PC-9 (cell line): ENCODE measurements at regions of chr14 and their contacts with region 1.

Region 1: DNA sequence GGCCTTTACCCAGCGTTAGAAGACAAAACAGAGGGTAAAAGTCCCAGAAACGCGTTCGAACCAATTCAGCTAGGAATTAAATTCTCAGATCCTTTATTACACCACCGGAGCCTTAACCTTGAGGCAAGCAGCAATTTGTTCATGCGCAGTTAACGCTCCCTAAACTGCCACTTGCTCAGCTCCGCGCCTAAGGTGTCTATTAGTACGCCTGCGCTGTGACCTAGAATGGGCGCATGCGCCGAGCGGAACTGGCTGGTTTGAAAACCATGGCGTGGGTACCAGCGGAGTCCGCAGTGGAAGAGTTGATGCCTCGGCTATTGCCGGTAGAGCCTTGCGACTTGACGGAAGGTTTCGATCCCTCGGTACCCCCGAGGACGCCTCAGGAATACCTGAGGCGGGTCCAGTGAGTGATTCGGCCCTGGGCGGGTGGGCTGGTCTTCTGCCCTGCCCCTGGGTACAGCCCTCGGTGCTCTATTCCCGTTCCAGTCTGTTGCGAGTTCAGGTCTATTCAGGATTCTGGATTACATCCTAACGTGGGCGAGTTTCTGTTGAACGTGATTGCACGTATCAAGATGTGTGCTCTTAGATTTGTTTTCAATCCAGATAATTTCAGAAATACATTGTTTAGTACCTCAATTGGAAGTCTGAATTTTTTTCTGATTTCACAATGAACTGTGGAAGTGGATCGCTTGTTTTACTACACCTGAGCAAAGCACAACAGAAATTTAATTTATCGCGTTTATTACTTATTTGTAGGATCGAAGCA is at the start of gene GEMIN2:
- DNase-seq: peak; percentile 82 to 84
- H3K4me3 ChIP-seq: peak within 1 kb of the TSS; percentile 69
- H3K27ac ChIP-seq: peak within 1 kb of the TSS; percentile 66
- H3K4me1 ChIP-seq: peaks cover 11% of the 10 kb centered on the region; the same call in 1 of the 2 replicates
- H3K27me3 ChIP-seq: no peaks in the 10 kb centered on the region
- CTCF ChIP-seq: no peak
- total RNA-seq, gene GEMIN2: 11.6 and 13.4 TPM in 2 replicates

Region 2: DNA sequence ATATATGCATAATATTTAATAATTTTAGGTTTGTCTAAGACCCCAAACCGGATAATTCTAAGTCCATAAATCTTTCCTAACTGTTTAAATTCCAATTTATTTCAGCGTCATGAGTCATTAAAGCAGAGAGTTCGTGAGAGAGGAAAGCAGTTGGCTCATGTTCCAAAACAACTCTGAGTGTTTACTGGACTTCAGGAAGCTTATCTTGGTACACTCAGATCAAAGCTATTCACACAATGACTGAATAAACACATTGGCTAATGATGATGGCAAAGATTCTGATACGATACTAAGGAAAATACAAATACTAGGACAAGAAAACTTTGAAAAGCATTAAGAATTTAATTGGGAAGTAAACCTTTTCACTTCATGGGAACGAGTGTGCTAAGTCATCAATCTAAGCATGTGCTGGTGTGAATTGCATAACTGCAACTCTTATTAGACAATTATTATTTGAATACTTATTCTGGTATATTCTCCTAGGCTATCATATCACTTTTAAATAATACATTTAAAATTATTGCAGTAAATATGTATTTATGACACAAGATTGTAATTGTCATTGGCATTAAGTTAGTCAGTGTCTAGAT is 823.6 kb before region 1 on chr14:
- CTCF ChIA-PET with region 1: no interaction called
- POLR2A ChIA-PET with region 1: no interaction called
- intact Hi-C with region 1: no loop called
- DNase-seq: peak in 1 of 2 experiments; percentile 87
- H3K4me3 ChIP-seq: no peak overlapping the region
- H3K27ac ChIP-seq: peak overlapping the region; percentile 75
- H3K4me1 ChIP-seq: peaks cover 18% of the 10 kb centered on the region
- H3K27me3 ChIP-seq: no peaks in the 10 kb centered on the region
- CTCF ChIP-seq: no peak

Region 3: DNA sequence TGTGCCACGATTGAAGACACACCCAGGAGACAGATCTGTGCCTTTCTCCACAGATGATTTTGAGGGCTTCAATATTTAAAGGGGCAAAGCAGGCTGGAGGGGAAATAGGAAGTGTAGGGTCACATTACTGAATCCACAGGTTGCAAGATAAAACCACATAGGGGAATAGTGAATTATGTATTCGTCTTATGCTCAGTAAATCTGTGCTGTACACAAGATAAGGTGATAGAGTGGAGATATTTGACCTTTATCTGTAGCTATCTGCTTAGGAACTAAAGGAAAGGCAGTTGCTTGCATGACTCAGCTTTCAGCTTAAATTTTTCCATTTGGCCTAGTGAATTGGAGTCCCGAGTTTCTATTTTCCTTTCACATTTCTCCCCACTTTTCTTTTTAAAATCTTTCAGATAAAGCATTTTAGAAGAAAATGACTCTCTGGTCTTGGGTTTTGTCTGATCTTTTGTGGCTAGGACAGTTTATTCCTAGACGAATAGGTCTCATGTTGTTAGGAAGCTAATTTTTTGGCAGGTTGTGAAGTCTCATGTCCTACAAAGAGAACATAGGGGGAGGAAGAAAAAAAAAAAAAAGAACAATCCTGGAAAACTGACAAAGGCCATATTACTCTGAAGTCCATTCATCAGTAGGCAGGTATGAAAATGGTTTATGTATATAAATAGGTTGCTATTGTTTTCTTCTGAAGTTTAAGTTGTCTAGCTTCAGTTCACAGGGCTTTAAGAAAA is 262.6 kb after region 1 on chr14:
- CTCF ChIA-PET with region 1: no interaction called
- POLR2A ChIA-PET with region 1: interaction called, 11 read pairs
- intact Hi-C with region 1: no loop called
- DNase-seq: peak; percentile 10 to 61
- H3K4me3 ChIP-seq: no peak overlapping the region
- H3K27ac ChIP-seq: peak overlapping the region; percentile 82
- H3K4me1 ChIP-seq: peaks cover 18% of the 10 kb centered on the region
- H3K27me3 ChIP-seq: no peaks in the 10 kb centered on the region
- CTCF ChIP-seq: no peak

Region 4: DNA sequence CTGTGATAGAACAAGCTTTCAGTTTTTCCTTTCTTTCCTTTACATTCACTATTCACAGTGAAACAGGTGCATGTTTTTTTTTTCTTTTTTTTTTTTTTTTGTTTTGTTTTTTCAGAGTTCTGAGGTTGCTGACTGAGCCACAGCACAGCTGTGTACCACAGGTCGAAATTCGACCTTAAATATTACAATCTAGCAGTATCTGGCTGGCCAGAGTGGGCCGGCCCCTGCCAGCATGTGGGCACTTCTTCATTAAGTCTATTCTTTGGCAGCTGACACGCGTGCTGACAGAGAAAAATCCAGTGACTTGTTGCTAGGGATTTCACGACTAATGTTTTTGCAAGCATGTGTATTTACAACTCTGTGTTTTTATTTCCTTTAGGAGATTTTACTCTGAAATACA is 284.1 kb after region 1 on chr14:
- CTCF ChIA-PET with region 1: no interaction called
- POLR2A ChIA-PET with region 1: interaction called, 13 read pairs
- intact Hi-C with region 1: no loop called
- DNase-seq: no peak
- H3K4me3 ChIP-seq: no peak overlapping the region
- H3K27ac ChIP-seq: no peak overlapping the region
- H3K4me1 ChIP-seq: 0 out of 2 replicates have a peak, but pooled peaks cover 5% of the 10 kb centered on the region
- H3K27me3 ChIP-seq: no peaks in the 10 kb centered on the region
- CTCF ChIP-seq: no peak